Mammary epithelial cell (primary cell): ENCODE measurements at regions of chr1 and their contacts with region 1.

Region 1: DNA sequence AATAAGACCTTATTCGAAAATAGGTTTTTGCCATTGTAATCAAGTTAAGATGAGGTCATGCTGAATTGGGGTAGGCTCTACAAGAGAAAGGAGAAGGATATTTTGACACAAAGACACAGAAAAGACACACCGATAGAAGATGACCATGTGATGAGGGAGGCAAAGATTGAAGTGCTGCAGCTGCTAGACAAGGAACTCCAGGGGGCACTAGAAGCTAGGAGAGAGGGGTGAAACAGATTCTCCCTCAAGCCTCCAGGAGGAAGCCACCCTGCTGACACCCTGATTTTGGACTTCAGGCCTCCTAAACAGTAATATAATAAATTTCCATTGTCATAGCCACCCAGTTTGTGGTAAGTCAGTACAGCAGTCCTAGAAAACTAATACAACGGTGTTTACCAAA is 506.8 kb upstream of the CAMK1G start:
- DNase-seq: peak; percentile 21
- H3K4me3 ChIP-seq: no peak overlapping the region
- H3K27ac ChIP-seq: no peak overlapping the region
- H3K4me1 ChIP-seq: peaks cover 26% of the 10 kb centered on the region
- H3K27me3 ChIP-seq: no peaks in the 10 kb centered on the region
- CTCF ChIP-seq: peak; percentile 42 to 43

Region 2: GRCh38 chr1:209190591-209191261 is 114.0 kb after region 1 on chr1:
- CTCF ChIA-PET with region 1: no interaction called
- dilution Hi-C with region 1: no loop called
- in situ Hi-C with region 1: no loop called
- intact Hi-C with region 1: loop called (anchors 1 kb)
- DNase-seq: peak; percentile 43
- H3K4me3 ChIP-seq: no peak overlapping the region
- H3K27ac ChIP-seq: no peak overlapping the region
- H3K4me1 ChIP-seq: no peaks in the 10 kb centered on the region
- H3K27me3 ChIP-seq: no peaks in the 10 kb centered on the region
- CTCF ChIP-seq: peak; percentile 85 to 90

Region 3: GRCh38 chr1:209248649-209249279 is 172.1 kb after region 1 on chr1:
- CTCF ChIA-PET with region 1: no interaction called
- dilution Hi-C with region 1: no loop called
- in situ Hi-C with region 1: no loop called
- intact Hi-C with region 1: loop called (anchors 1 kb)
- DNase-seq: peak; percentile 56
- H3K4me3 ChIP-seq: no peak overlapping the region
- H3K27ac ChIP-seq: no peak overlapping the region
- H3K4me1 ChIP-seq: peaks cover 13% of the 10 kb centered on the region
- H3K27me3 ChIP-seq: no peaks in the 10 kb centered on the region
- CTCF ChIP-seq: peak; percentile 92 to 95

Region 4: GRCh38 chr1:209490013-209490412 is 413.3 kb after region 1 on chr1:
- CTCF ChIA-PET with region 1: no interaction called
- dilution Hi-C with region 1: no loop called
- in situ Hi-C with region 1: no loop called
- intact Hi-C with region 1: loop called (anchors 5 kb)
- DNase-seq: peak; percentile 26
- H3K4me3 ChIP-seq: no peak overlapping the region
- H3K27ac ChIP-seq: no peak overlapping the region
- H3K4me1 ChIP-seq: peaks cover 26% of the 10 kb centered on the region
- H3K27me3 ChIP-seq: no peaks in the 10 kb centered on the region
- CTCF ChIP-seq: peak; percentile 74 to 77